ENCODE measurements at regions of chr15 and their contacts with region 1.

Region 1: DNA sequence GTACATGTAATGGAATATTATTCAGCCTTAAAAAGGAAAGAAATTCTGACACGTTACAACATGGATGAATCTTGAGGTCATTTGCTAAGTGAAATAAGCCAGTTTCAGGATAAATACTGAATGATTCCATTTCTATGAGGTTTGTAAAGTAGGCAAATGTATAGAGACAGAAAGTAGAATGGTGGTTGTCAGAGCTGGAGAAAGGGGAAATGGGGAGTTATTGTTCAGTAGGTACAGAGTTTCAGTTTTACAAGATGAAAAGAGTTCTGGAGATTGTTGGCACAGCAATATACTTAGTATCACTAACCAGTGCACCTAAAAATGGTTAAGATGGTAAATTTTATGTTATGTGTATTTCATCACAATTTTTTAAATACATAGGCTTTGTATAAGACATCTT is 60.6 kb downstream of the USP8 start:
- DNase-seq: no peak
- H3K4me3 Mint-ChIP-seq: no peak overlapping the region
- H3K27ac Mint-ChIP-seq: peak overlapping the region; percentile 38
- H3K4me1 Mint-ChIP-seq: peaks cover 26% of the 10 kb centered on the region
- H3K27me3 Mint-ChIP-seq: no peaks in the 10 kb centered on the region

Region 2: GRCh38 chr15:50424066-50424890 is 60.5 kb before region 1 on chr15 and contains the start of gene USP8:
- intact Hi-C with region 1: loop called (anchors 10 kb)
- DNase-seq: peak; percentile 93
- H3K4me3 Mint-ChIP-seq: peak within 1 kb of the TSS; percentile 95
- H3K27ac Mint-ChIP-seq: peak within 1 kb of the TSS; percentile 85
- H3K4me1 Mint-ChIP-seq: peaks cover 16% of the 10 kb centered on the region
- H3K27me3 Mint-ChIP-seq: no peaks in the 10 kb centered on the region
- total RNA-seq, gene USP8: 57.2 and 57.4 TPM in 2 replicates

Region 3: DNA sequence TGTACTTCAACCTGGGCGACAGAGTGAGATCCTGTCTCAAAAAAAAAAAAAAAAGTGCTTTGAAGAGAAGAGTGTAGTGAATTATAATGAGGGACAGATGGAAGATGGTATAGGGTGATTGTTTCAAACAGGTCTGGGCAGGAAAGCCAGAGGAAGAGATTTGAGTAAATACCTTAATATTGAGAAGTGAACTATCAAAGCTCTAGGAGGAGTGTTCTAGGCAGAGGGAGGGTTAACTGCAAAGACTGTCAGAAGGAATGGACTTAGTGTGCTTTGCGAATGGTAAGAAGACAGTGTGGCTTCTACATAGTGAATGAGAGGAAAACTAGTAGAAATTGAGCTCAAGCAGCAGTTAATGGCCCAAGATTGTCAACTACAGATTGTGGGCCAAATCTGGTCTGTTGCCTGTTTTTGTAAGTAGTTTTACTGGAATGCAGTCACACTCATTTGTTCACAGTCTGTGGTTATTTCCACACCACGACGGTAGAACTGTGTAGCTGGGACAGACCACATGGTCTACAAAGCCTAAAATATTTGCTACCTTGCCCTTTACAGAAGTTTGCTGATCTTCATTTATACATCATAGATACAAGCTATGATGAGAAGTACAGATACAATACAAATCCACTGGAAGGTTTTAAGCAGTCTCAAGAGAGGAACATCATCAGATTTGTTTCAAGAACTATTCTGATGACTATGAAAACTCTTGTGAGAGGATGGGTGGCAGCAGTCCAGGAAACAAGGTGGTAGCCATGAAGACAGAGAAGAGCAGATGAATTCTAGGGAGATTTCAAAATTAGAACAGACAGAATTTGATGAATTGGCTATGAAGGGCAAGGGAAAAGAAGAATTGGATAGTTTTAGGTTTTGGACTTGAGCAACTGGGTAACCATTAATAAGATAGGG is 78.2 kb after region 1 on chr15:
- intact Hi-C with region 1: loop called (anchors 5 kb)
- DNase-seq: no peak
- H3K4me3 Mint-ChIP-seq: peak overlapping the region; percentile 15
- H3K27ac Mint-ChIP-seq: peak overlapping the region; percentile 95
- H3K4me1 Mint-ChIP-seq: peaks cover 29% of the 10 kb centered on the region
- H3K27me3 Mint-ChIP-seq: no peaks in the 10 kb centered on the region